Aorta (tissue), 5 donors: ENCODE measurements at regions of chr3 and their contacts with region 1.

Region 1: GRCh38 chr3:127762077-127762786 is 60.1 kb downstream of the MGLL start:
- DNase-seq: peak in 1 of 2 donors; percentile 78
- ATAC-seq: peak; percentile 63
- H3K4me3 ChIP-seq: peak overlapping the region in 1 of 2 donors; percentile 36
- H3K27ac ChIP-seq: peak overlapping the region; percentile 40 to 66
- H3K4me1 ChIP-seq: peaks cover 0 to 4% of the 10 kb centered on the region in 2 donors
- H3K27me3 ChIP-seq: no peaks in the 10 kb centered on the region

Region 2: DNA sequence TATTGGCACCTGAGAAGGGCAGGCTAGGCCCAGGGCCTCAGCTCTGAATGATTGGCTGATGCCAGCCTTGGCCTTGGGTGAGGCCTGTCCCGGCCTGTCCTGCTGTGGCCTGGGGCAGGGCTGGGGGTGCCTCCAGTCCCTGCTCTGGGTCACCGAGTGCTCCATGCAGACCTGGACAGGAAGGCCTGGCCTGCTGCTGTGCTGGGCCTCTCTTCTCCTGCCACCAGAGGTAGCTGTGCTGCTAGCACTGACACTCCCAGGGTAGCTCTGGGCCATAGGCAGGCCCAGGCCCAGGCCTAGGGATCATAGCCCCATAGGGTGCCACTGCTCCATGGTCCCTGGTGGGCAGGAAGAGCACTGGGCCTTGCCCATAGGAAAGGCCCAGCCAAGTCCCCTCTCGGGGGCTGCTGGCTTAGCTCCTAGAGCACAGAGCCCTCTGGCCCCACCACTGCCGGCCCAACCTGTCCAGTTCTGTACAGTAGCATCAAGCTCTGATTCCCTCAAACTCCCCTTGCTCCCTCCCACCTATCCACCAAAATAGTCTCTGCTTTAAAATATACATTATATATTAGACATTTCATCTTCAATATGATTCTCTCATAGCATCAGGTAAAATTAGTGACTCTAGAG is 71.3 kb before region 1 on chr3:
- intact Hi-C with region 1: loop called in 1 of 2 experiments (anchors 5 kb)
- DNase-seq: peak; percentile 72 to 79
- ATAC-seq: peak; percentile 84
- H3K4me3 ChIP-seq: no peak overlapping the region
- H3K27ac ChIP-seq: peak overlapping the region; percentile 70 to 90
- H3K4me1 ChIP-seq: no peaks in the 10 kb centered on the region
- H3K27me3 ChIP-seq: no peaks in the 10 kb centered on the region

Region 3: GRCh38 chr3:127959846-127960245 is 197.6 kb after region 1 on chr3:
- intact Hi-C with region 1: loop called in 1 of 2 experiments (anchors 10 kb)
- DNase-seq: no peak
- ATAC-seq: no peak
- H3K4me3 ChIP-seq: no peak overlapping the region
- H3K27ac ChIP-seq: no peak overlapping the region
- H3K4me1 ChIP-seq: no peaks in the 10 kb centered on the region
- H3K27me3 ChIP-seq: no peaks in the 10 kb centered on the region